Activated CD4-positive, alpha-beta memory T cell treated with anti-CD3 and anti-CD28 coated beads, Interleukin-2, amount 10 ng/mL, durations not matched to agents 7 days and 5 days (primary cell): ENCODE measurements at regions of chr12 and their contacts with region 1.

Region 1: DNA sequence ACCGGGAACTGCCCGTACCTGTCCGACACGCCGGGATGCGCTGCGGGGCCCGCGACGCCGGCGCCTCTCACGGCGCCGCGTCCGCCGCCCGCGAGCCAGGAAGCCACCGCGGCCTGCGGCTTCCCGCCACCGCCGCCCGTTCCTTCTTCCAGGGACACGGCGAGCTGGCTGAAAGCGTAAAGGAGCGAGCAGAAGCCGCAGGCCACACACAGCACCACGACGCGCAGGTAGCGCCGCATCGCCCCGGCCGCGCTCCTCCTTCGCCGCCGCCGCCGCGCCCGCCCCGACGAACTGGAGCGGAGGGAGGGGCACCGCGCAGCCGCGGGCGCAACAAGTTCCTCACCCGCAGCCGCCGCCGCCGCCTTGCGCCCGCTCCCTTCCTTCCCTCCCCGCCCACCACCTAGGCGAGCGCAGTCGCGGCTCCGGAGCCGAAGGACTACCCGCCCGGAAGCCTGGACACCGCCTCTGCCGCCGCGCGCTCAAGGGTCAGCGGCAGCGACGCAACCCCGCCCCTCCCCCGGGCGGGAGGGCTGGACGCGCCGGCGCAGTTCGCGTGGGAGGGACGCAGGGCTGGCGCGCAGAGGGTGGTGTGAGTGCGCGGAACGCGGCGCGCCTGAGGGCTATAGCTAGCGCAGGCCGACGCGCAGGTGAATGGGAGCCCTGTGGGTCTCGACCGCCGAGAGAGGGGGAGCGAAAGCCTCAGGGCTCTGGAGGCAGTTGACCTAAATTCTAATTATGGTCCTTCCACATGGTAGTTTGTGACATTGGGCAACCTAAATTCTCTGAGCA is at the start of gene GXYLT1:
- DNase-seq: peak; percentile 82
- H3K4me3 Mint-ChIP-seq: peak within 1 kb of the TSS; percentile 90
- H3K27ac Mint-ChIP-seq: peak within 1 kb of the TSS; percentile 67
- H3K4me1 Mint-ChIP-seq: peaks cover 32% of the 10 kb centered on the region
- H3K27me3 Mint-ChIP-seq: peaks cover 3% of the 10 kb centered on the region
- total RNA-seq, gene GXYLT1: 7.8 to 9.7 TPM

Region 2: GRCh38 chr12:42097971-42098370 is 46.6 kb before region 1 on chr12:
- CTCF ChIA-PET with region 1: no interaction called
- POLR2A ChIA-PET with region 1: interaction called, 10 read pairs
- DNase-seq: no peak
- H3K4me3 Mint-ChIP-seq: peak overlapping the region; percentile 75
- H3K27ac Mint-ChIP-seq: peak overlapping the region; percentile 86
- H3K4me1 Mint-ChIP-seq: peaks cover 24% of the 10 kb centered on the region
- H3K27me3 Mint-ChIP-seq: no peaks in the 10 kb centered on the region